Psoas muscle (tissue), 8 donors: ENCODE measurements at regions of chr14 and their contacts with region 1.

Region 1: DNA sequence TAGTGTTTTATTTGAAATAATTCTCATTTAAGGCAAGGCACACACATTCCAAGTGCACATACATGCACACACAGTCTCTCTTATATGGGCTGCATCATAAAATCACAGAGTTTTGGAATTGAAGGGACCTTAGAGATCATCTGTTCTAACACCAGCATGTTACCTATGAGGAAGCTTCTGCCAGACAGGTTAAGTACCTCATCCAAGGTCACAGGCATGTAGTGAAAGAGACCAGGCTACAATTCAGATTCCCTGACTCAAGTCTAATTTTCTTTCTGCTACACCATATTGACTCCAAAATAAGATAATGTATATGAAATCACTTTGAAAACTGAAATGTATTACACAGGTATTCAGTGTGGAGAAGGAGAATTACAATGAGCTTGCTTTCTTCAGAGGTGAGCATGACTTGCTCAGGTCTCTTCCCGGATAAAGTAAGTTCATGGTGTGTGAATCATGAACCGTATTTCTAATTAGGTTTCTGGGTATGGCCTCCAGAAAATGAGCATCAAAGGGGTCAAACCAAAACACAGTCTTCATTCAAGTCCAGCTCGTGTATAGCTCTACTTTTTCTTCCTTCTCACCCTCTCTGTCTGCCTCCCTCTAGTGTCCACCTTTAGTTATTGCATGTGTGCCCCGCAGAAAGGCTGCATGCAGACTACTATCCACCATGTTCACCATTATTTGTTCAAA is 411.9 kb downstream of the FUT8 start:
- DNase-seq: no peak
- ATAC-seq: peak; percentile 82 to 87 (median 86)
- H3K4me3 ChIP-seq: no peak overlapping the region
- H3K27ac ChIP-seq: no peak overlapping the region
- H3K4me1 ChIP-seq: no peaks in the 10 kb centered on the region
- H3K27me3 ChIP-seq: no peaks in the 10 kb centered on the region
- CTCF ChIP-seq: peak; percentile 87

Region 2: GRCh38 chr14:65164068-65164824 is 660.2 kb before region 1 on chr14:
- intact Hi-C with region 1: loop called (anchors 1 to 5 kb)
- DNase-seq: no peak
- ATAC-seq: peak in 3 of 4 donors; percentile 51 to 82 (median 67)
- H3K4me3 ChIP-seq: no peak overlapping the region
- H3K27ac ChIP-seq: no peak overlapping the region
- H3K4me1 ChIP-seq: no peaks in the 10 kb centered on the region
- H3K27me3 ChIP-seq: no peaks in the 10 kb centered on the region
- CTCF ChIP-seq: peak; percentile 73

Region 3: DNA sequence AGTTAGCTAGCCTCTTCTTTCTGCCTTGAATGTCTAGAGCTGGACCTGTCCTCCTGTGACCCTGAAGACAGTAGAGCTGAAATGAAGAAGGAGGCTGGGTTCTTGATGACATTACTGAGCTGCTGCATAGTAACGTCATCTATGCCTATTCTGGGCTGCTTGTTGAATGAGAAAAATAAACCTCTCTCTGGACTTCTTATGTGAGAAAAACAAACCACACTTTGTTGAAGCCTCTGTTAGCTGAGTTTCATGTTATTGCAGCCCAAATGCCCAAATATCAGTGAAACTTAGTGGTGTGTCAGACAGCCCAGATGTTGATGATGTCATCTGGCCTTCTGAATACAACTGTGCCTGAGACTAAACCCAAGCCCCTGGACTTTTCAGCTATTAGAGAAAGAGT is 655.1 kb before region 1 on chr14:
- intact Hi-C with region 1: loop called (anchors 1 to 5 kb)
- DNase-seq: no peak
- ATAC-seq: peak in 2 of 4 donors; percentile 50 to 60
- H3K4me3 ChIP-seq: no peak overlapping the region
- H3K27ac ChIP-seq: no peak overlapping the region
- H3K4me1 ChIP-seq: no peaks in the 10 kb centered on the region
- H3K27me3 ChIP-seq: peaks cover 0 to 20% (median 3%) of the 10 kb centered on the region in 3 donors
- CTCF ChIP-seq: no peak

Region 4: DNA sequence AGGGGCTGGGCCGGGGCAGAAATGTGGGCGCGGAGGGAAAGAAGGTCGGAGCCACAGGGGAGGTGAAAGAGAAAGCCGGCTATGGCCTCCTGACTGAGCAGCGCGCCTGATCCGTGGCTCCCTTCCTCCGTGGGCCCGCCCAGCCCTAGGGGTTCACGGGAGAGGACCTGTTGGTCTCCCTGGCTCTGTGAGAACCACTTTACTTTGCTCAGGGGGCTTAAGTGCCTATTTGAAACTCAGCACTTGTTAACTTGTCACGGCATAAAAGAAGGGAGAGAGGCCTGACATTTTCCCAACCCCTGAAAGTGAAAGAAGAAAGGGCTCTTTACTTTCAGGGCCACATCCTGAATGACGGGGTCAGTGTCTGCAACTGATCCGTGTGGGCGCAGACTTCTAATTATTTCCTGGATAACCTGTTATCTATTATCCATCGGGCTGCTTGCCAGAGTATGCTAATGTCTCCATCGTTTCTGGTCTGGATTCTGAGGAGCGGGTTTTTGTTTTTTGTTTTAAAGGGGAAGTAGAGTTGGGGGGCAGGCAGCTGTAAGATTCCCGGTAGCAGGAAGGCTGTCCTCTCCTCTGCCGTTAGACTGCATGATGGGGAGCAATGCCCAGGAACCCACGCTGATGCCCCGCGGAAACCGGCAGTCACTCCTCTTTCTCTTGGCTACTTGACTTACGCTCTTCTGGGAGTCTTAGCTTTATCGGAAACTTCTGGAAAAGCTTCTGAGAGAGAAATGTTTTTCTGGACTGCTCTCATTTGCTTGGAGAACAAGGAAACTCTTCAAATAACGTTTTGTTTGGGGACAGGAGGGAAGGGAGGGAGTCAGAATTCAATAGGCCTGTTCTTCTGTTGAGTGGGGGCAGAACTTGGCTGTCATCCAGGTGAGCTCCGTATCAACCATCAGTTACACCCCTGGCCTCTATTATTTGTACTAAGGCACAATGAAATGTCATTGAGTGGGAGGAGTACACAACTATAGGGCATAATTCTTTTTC is 594.4 kb before region 1 on chr14:
- intact Hi-C with region 1: loop called in 1 of 2 experiments (anchors 5 kb)
- DNase-seq: peak in 1 of 2 donors; percentile 63
- ATAC-seq: peak; percentile 47 to 79 (median 68)
- H3K4me3 ChIP-seq: peak overlapping the region; percentile 66
- H3K27ac ChIP-seq: peak overlapping the region; percentile 55
- H3K4me1 ChIP-seq: no peaks in the 10 kb centered on the region
- H3K27me3 ChIP-seq: no peaks in the 10 kb centered on the region
- CTCF ChIP-seq: no peak

Region 5: GRCh38 chr14:65412032-65412846 is 412.2 kb before region 1 on chr14 and contains the start of gene FUT8:
- intact Hi-C with region 1: loop called (anchors 2 to 5 kb)
- DNase-seq: peak; percentile 97 to 99
- ATAC-seq: peak; percentile 93 to 96 (median 94)
- H3K4me3 ChIP-seq: peak within 1 kb of the TSS; percentile 80
- H3K27ac ChIP-seq: peak within 1 kb of the TSS; percentile 81
- H3K4me1 ChIP-seq: peaks cover 5% of the 10 kb centered on the region
- H3K27me3 ChIP-seq: no peaks in the 10 kb centered on the region
- CTCF ChIP-seq: peak; percentile 63
- total RNA-seq, gene FUT8: 4.1 to 8.6 (median 6.7) TPM

Region 6: GRCh38 chr14:65783576-65783975 is 40.9 kb before region 1 on chr14:
- intact Hi-C with region 1: no loop called
- DNase-seq: no peak
- ATAC-seq: no peak
- H3K4me3 ChIP-seq: no peak overlapping the region
- H3K27ac ChIP-seq: no peak overlapping the region
- H3K4me1 ChIP-seq: no peaks in the 10 kb centered on the region
- H3K27me3 ChIP-seq: no peaks in the 10 kb centered on the region
- CTCF ChIP-seq: no peak